Common myeloid progenitor, CD34-positive (primary cell): ENCODE measurements at regions of chr3 and their contacts with region 1.

Region 1: GRCh38 chr3:58414538-58415197 is 19.0 kb downstream of the PDHB start:
- DNase-seq: peak; percentile 70 to 89 (median 85)
- H3K4me3 ChIP-seq: no peak overlapping the region
- H3K27ac ChIP-seq: peak overlapping the region in 1 of 2 experiments; percentile 37
- H3K4me1 ChIP-seq: peaks cover 0 to 9% (median 4%) of the 10 kb centered on the region in 4 experiments
- H3K27me3 ChIP-seq: no peaks in the 10 kb centered on the region

Region 2: DNA sequence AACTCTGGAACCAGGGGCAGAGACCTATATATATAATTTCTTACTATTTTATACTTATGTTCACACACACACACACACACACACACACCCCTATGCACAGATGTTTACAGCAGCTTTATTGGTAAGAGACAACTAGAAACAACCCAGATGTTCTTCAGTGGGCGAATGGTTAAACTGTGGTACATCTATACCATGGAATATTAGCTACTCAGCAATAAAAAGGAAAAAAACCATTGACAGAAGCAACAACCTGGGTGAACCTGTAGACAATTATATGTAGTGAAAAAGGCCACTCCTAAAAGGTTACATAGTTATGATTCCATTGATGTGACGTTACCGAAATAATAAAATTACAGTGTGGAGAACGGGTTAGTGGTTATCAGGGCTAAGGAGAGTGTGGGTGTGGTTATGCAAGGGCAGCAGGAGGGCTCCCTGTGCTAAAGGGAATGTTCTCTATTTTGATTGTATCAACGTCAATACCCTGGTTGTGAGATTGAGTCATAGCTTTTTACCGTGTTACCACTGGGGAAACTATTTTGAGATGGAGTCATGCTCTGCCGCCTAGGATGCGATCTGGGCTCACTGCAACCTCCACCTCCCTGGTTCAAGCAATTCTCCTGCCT is 321.0 kb before region 1 on chr3:
- CTCF ChIA-PET with region 1: no interaction called
- POLR2A ChIA-PET with region 1: no interaction called
- DNase-seq: no peak
- H3K4me3 ChIP-seq: no peak overlapping the region
- H3K27ac ChIP-seq: no peak overlapping the region
- H3K4me1 ChIP-seq: no peaks in the 10 kb centered on the region
- H3K27me3 ChIP-seq: no peaks in the 10 kb centered on the region

Region 3: GRCh38 chr3:58305882-58306711 is 108.6 kb before region 1 on chr3 and contains the starts of genes HTD2 and RPP14:
- CTCF ChIA-PET with region 1: interaction called, 36 read pairs
- POLR2A ChIA-PET with region 1: no interaction called
- DNase-seq: peak; percentile 98 to 100 (median 99)
- H3K4me3 ChIP-seq: peak within 1 kb of the TSS; percentile 66 to 97 (median 92)
- H3K27ac ChIP-seq: peak within 1 kb of the TSS; percentile 98 to 99
- H3K4me1 ChIP-seq: peaks cover 3 to 22% (median 19%) of the 10 kb centered on the region in 4 experiments
- H3K27me3 ChIP-seq: peaks cover 0 to 4% (median 0%) of the 10 kb centered on the region in 5 experiments

Region 4: GRCh38 chr3:58332575-58333188 is 82.0 kb before region 1 on chr3 and contains the start of gene PXK:
- CTCF ChIA-PET with region 1: interaction called, 44 read pairs
- POLR2A ChIA-PET with region 1: no interaction called
- DNase-seq: peak; percentile 78 to 93 (median 87)
- H3K4me3 ChIP-seq: peak within 1 kb of the TSS; percentile 58 to 96 (median 85)
- H3K27ac ChIP-seq: peak within 1 kb of the TSS in 1 of 2 experiments; percentile 76
- H3K4me1 ChIP-seq: peaks cover 11 to 42% (median 34%) of the 10 kb centered on the region in 4 experiments
- H3K27me3 ChIP-seq: no peaks in the 10 kb centered on the region

Region 5: GRCh38 chr3:58398669-58399333 is 15.9 kb before region 1 on chr3:
- CTCF ChIA-PET with region 1: interaction called, 28 read pairs
- POLR2A ChIA-PET with region 1: no interaction called
- DNase-seq: no peak
- H3K4me3 ChIP-seq: no peak overlapping the region
- H3K27ac ChIP-seq: no peak overlapping the region
- H3K4me1 ChIP-seq: no peaks in the 10 kb centered on the region
- H3K27me3 ChIP-seq: no peaks in the 10 kb centered on the region

Region 6: DNA sequence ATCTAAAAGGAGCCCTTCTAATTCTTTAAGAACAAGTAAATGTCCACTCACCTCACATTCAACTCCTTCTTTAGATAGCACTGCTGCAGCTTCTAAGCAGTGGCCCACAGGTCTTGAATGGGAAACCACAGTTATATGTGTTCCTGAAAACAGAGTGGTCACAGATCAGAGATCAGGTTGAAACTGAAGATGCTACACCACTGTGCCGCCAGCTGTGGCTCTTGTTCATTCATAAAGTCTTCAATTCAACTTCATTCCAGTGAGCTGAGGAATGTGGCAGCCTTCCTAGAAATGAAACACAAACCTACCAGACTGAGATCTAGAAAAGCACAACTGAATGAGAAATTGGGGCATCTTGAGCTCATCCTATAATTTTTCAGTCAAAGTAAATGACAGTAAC is 15.0 kb after region 1 on chr3:
- CTCF ChIA-PET with region 1: interaction called, 23 read pairs
- POLR2A ChIA-PET with region 1: no interaction called
- DNase-seq: no peak
- H3K4me3 ChIP-seq: no peak overlapping the region
- H3K27ac ChIP-seq: no peak overlapping the region
- H3K4me1 ChIP-seq: peaks cover 7 to 18% (median 13%) of the 10 kb centered on the region in 4 experiments
- H3K27me3 ChIP-seq: no peaks in the 10 kb centered on the region